ENCODE measurements at regions of chr11 and their contacts with region 1.

Region 1: DNA sequence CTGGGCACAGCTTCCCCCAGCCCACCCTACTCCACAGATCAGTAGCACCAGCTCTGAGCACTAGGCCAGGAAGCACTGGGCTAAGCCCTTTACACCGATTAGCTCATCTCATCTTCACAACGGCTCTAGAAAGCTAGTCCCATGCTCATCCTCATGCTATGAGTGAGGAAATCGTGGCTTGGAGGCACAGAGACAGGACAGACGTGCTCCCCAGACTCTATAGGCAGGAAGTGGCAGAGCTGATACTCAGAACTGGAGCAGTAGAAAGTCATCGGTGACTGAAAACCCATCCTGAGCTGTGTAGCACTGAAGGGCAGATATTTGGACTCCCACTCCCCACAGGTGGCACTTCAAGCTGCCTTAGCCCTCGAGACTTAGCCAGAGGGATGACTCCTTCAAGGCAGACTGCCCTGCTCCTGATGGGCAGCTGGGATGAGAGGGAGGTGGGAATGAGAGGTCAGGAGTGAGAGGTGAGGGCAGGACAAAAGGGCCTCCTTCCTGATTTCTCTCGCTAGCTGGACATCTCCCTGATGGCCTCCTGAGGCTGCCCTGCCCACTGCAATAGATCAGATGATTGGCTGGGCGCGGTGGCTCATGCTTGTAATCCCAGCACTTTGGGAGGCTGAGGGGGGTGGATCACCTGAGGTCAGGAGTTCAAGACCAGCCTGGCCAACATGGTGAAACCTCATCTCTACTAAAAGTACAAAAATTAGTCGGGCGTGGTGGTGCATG is 9.7 kb downstream of the CD5 start:
- DNase-seq: no peak
- ATAC-seq: no peak
- H3K4me3 ChIP-seq: no peak overlapping the region
- H3K27ac ChIP-seq: no peak overlapping the region
- H3K4me1 ChIP-seq: peaks cover 0 to 3% (median 0%) of the 10 kb centered on the region in 9 donors
- H3K27me3 ChIP-seq: no peaks in the 10 kb centered on the region
- CTCF ChIP-seq: no peak

Region 2: GRCh38 chr11:60775420-60775961 is 336.5 kb before region 1 on chr11:
- intact Hi-C with region 1: no loop called
- DNase-seq: peak; percentile 60 to 89
- ATAC-seq: peak; percentile 82 to 92 (median 88)
- H3K4me3 ChIP-seq: peak overlapping the region in 1 of 10 donors; percentile 12
- H3K27ac ChIP-seq: peak overlapping the region in 6 of 10 donors; percentile 4 to 59 (median 34)
- H3K4me1 ChIP-seq: peaks cover 4 to 33% (median 18%) of the 10 kb centered on the region in 9 donors
- H3K27me3 ChIP-seq: peaks cover 0 to 15% (median 3%) of the 10 kb centered on the region in 7 donors
- CTCF ChIP-seq: peak; percentile 87 to 96 (median 93)

Region 3: DNA sequence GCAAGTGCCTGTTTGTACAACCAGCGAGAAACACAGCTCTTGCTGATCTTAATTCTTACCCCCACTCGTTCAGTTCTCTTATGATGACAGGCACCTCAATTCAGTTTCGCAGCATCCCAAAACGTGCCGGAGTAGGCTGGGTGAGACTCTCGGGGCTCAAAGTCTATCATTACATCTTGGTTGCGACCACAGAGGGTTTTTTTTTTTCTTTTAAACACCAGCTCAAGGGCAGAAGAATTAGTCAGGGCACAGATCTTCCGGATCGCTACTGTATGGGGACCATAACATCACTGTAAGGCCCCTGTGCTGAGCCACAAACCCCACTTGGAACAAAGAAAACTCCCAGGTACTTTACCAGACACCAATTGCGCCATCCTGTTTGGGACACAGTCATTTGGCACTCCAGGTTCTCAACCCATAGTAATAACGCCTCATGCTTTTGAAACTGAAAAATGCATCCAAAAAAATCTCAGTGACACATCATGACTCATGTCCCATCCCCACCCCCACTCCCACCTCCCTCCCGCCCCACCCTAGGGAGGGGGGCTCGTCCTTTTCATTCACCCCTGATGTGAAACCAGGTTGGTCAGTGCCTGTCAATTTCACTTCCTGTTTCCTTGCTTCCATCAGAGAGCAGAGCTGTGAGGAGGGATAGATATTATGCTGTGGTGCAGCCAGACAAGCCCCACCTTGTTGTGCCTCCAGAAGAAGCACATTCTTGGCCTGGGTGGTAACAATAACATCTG is 50.7 kb before region 1 on chr11:
- intact Hi-C with region 1: loop called in 1 of 10 experiments (anchors 10 kb)
- DNase-seq: no peak
- ATAC-seq: peak in 3 of 8 donors; percentile 11 to 49 (median 48)
- H3K4me3 ChIP-seq: no peak overlapping the region
- H3K27ac ChIP-seq: peak overlapping the region in 1 of 10 donors; percentile 50
- H3K4me1 ChIP-seq: peaks cover 0 to 18% (median 0%) of the 10 kb centered on the region in 9 donors
- H3K27me3 ChIP-seq: no peaks in the 10 kb centered on the region
- CTCF ChIP-seq: no peak

Region 4: DNA sequence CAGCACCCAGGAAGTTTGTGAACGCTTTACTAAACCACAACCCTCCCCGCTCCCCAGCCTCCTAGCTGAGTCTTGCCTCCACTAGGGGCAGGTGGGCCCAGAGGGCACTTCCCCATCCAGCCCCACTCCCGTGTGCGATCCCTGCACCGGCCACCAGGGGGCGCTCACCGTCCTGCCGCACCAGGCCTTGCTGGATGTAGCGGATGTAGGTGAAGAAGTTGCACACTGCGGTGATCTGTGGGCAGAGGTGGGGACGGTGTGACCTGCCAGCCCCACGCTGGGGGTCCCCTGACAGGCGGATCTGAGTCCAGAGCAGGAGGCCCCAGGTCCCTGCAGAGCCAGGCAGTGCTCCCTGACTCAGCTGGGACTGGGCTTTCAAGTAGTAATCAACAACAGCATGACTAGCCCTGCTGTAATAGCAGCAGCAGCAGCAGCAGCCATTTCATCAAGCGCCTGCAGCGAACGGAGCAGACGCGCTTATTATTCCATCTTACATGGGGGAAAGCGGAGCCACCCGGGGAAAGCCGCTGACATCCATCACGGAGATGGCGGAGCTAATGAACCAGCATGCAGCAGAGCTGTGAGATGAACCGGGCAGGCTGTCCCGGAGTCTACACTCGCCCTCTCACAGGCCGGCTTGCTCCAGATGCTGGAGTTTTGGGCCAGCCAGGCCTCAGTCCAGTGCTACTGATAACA is 787.3 kb after region 1 on chr11:
- intact Hi-C with region 1: no loop called
- DNase-seq: peak; percentile 84 to 88
- ATAC-seq: peak; percentile 67 to 87 (median 82)
- H3K4me3 ChIP-seq: no peak overlapping the region
- H3K27ac ChIP-seq: peak overlapping the region in 6 of 10 donors; percentile 2 to 61 (median 42)
- H3K4me1 ChIP-seq: peaks cover 0 to 22% (median 10%) of the 10 kb centered on the region in 9 donors
- H3K27me3 ChIP-seq: no peaks in the 10 kb centered on the region
- CTCF ChIP-seq: peak; percentile 98 to 100 (median 100)

Measured in heart right ventricle (tissue), 16 donors.